ENCODE measurements at regions of chr12 and their contacts with region 1.

Region 1: DNA sequence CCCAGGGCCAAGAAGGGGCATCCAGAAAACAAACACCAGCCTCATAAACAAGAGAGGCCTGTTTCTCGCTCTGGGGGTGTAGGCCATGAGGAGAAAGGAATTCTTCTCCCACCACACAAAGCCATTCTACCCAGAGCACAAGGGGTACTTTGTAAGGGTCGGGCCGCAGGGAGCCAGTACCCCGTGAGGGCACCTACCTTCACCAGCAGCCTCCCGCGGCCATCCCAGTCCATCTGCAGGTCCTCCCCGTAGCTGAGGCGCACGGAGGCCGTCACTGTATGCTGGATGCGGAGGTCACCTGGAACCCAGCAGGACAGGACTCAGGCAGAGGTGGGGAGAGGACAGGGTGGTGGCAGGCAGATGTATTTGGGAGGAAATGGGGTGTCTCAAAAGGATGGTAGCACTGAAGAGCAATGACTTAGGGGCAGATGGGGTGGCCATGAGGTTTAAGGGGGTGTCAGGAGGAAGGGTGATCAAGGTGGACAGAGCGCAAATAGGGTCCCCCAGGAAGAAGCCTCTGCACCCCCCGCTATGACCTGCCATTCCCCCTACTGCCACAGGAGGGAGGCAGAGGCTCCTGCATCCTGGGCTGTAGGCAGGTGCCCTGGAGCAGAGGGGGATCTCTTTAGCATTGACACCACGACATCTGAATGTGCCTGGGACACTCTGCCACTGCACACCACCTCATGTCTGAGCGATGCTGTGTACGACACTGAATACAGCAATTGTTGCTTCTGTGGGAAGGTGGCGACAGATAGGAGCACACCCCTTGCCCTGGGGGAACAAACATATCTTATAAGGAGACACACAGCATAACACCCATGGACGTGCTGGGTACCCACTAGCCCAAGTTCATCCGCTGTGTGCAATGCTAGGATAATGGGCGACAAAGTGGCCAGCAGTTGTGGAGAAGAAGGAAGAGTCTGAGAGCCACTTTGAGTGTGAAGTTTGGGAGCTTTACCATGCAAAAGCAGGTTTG is 61.4 kb downstream of the VWF start:
- DNase-seq: peak; percentile 32 to 76 (median 50)
- ATAC-seq: peak; percentile 97
- H3K4me3 ChIP-seq: no peak overlapping the region
- H3K4me3 Mint-ChIP-seq: no peak overlapping the region
- H3K27ac ChIP-seq: no peak overlapping the region
- H3K27ac Mint-ChIP-seq: no peak overlapping the region
- H3K4me1 ChIP-seq: no peaks in the 10 kb centered on the region
- H3K4me1 Mint-ChIP-seq: no peaks in the 10 kb centered on the region
- H3K27me3 ChIP-seq: peaks cover 0 to 5% of the 10 kb centered on the region in 2 experiments
- H3K27me3 Mint-ChIP-seq: peaks cover 19% of the 10 kb centered on the region
- CTCF ChIP-seq: peak; percentile 88

Region 2: DNA sequence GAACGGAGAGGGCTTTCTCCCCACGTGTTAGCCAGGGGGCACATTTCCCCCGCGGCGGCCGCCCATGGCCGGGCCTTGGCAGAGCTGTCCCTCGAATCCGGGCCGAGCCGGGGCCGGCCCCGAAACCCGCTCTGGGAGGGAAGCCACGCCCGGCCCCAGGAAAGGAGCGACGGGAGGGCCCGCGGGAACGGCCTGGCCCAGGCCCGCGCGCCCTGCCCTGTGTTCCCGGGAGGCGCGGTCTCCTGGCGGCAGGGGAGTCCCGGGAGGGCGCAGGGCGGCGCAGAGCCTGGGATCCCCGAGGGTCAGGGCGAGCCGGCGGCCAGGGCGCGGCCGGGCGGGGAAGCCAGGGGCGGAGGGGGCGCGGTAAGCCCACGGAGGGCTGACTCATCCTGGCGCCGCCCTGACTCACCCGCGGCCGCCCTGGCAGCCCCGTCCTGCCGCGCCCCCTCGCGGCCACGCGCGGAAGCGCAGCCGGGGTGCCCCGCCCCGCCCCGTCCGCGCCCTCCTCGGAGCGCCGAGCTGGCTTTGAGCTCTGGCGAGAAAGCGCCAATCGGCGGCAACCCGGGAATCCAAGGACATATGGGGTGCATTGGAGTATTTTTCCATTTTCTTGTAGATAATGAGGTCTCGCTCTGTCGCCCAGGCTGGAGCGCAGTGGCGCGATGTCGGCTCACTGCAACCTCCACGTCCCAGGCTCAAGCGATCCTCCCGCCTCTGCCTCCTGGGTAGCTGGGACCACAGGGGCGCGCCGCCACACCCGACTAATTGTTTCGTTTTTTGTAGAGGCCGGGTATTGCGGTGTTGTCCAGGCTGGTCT is 215.6 kb after region 1 on chr12:
- CTCF ChIA-PET with region 1: interaction called, 3 read pairs
- POLR2A ChIA-PET with region 1: no interaction called
- intact Hi-C with region 1: loop called (anchors 1 kb)
- DNase-seq: peak; percentile 60 to 92 (median 82)
- ATAC-seq: peak; percentile 97
- H3K4me3 ChIP-seq: peak overlapping the region; percentile 42
- H3K4me3 Mint-ChIP-seq: peak overlapping the region; percentile 81
- H3K27ac ChIP-seq: no peak overlapping the region
- H3K27ac Mint-ChIP-seq: no peak overlapping the region
- H3K4me1 ChIP-seq: peaks cover 12% of the 10 kb centered on the region
- H3K4me1 Mint-ChIP-seq: peaks cover 6% of the 10 kb centered on the region
- H3K27me3 ChIP-seq: peaks cover 6 to 12% of the 10 kb centered on the region in 2 experiments
- H3K27me3 Mint-ChIP-seq: peaks cover 35% of the 10 kb centered on the region
- CTCF ChIP-seq: peak; percentile 57

Region 3: GRCh38 chr12:6285063-6285477 is 222.0 kb after region 1 on chr12:
- CTCF ChIA-PET with region 1: no interaction called
- POLR2A ChIA-PET with region 1: no interaction called
- intact Hi-C with region 1: loop called in 1 of 2 experiments (anchors 1 kb)
- DNase-seq: peak; percentile 28 to 85 (median 48)
- ATAC-seq: peak; percentile 90
- H3K4me3 ChIP-seq: no peak overlapping the region
- H3K4me3 Mint-ChIP-seq: no peak overlapping the region
- H3K27ac ChIP-seq: no peak overlapping the region
- H3K27ac Mint-ChIP-seq: no peak overlapping the region
- H3K4me1 ChIP-seq: peaks cover 4% of the 10 kb centered on the region
- H3K4me1 Mint-ChIP-seq: peaks cover 5% of the 10 kb centered on the region
- H3K27me3 ChIP-seq: no peaks in the 10 kb centered on the region
- H3K27me3 Mint-ChIP-seq: peaks cover 14% of the 10 kb centered on the region
- CTCF ChIP-seq: peak; percentile 97